Activated CD8-positive, alpha-beta T cell treated with anti-CD3 and anti-CD28 coated beads for 36 hours (primary cell): ENCODE measurements at regions of chr10 and their contacts with region 1.

Region 1: GRCh38 chr10:115355162-115355760 is 262.1 kb downstream of the ATRNL1 start:
- DNase-seq: peak; percentile 33
- ATAC-seq: no peak
- H3K4me3 Mint-ChIP-seq: no peak overlapping the region
- H3K27ac Mint-ChIP-seq: no peak overlapping the region
- H3K4me1 Mint-ChIP-seq: no peaks in the 10 kb centered on the region
- H3K27me3 Mint-ChIP-seq: no peaks in the 10 kb centered on the region
- CTCF ChIP-seq: peak; percentile 67

Region 2: DNA sequence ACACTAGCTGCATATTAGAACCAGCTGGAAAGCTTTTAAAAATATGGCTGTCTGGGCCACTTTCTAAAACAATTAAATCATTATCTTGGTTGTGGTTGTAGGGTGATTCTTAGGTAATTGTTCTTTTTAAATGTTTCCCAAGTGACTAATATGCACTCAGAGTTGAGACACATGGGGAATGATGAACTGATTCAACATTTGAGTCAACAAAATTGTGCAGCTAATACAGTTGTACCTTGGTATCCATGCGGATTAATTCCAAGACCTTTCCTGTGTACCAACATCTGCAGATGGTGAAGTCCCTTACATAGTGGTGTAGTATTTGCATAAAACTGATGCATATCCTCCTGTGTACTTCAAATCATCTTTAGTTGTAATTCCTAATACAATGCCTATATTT is 19.9 kb before region 1 on chr10:
- CTCF ChIA-PET with region 1: no interaction called
- POLR2A ChIA-PET with region 1: no interaction called
- intact Hi-C with region 1: no loop called
- DNase-seq: no peak
- ATAC-seq: no peak
- H3K4me3 Mint-ChIP-seq: no peak overlapping the region
- H3K27ac Mint-ChIP-seq: no peak overlapping the region
- H3K4me1 Mint-ChIP-seq: no peaks in the 10 kb centered on the region
- H3K27me3 Mint-ChIP-seq: no peaks in the 10 kb centered on the region
- CTCF ChIP-seq: no peak

Region 3: GRCh38 chr10:116385994-116386809 is 1030.9 kb after region 1 on chr10:
- CTCF ChIA-PET with region 1: no interaction called
- POLR2A ChIA-PET with region 1: no interaction called
- intact Hi-C with region 1: loop called (anchors 5 kb)
- DNase-seq: no peak
- ATAC-seq: peak; percentile 55
- H3K4me3 Mint-ChIP-seq: no peak overlapping the region
- H3K27ac Mint-ChIP-seq: no peak overlapping the region
- H3K4me1 Mint-ChIP-seq: no peaks in the 10 kb centered on the region
- H3K27me3 Mint-ChIP-seq: peaks cover 1% of the 10 kb centered on the region
- CTCF ChIP-seq: peak; percentile 53